Activated B cell treated with CpG ODN at 0.5 μM for 24 hours (primary cell): ENCODE measurements at regions of chr4 and their contacts with region 1.

Region 1: DNA sequence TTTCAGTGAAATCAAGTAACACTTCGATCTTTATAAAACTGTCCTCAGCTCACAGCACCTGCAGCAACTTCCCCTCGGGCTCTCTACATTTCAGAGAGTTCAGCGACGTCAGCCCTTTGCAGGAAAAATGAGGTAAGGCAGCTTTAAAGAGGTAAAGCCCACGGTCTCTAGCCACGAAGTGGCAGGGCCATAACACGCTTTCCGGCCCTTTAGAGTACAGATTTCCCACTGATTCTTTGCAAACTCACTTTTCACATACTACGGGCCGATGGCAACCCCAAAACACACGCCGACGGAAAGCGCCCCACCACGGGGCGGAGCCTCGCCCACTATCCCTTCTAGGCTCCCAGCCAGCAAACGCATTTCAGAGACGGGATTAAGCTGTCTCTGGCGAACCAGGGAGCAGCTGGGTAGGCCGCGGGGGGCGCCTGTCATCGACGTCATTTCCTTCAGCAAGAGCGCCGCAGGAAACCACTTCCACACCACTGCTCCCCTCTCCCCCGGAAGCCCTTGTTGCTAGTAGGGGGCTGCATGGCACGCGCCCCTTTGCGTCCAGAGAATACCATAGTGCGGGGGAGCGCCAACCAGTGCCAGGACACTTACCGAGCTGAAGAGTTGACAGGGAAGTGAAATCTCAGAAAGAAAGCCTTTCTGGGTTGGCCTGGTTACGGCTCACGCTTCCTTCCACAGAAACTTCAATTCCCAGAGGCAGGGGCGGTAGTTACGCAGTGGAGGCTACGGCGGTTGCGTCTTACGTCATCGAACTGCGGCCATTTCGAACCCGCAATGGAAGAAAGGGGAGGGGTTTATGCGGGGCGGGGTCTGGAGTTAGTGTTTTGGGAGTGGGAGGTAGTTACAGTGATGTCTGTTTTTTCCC is at the start of gene TRMT10A:
- DNase-seq: peak; percentile 88
- ATAC-seq: peak; percentile 85
- H3K4me3 Mint-ChIP-seq: peak within 1 kb of the TSS; percentile 99
- H3K27ac Mint-ChIP-seq: peak within 1 kb of the TSS; percentile 100
- H3K4me1 Mint-ChIP-seq: peaks cover 18% of the 10 kb centered on the region
- H3K27me3 Mint-ChIP-seq: peaks cover 12% of the 10 kb centered on the region
- CTCF ChIP-seq: no peak
- total RNA-seq, gene TRMT10A: 4.9 and 10.2 TPM in 2 replicates

Region 2: DNA sequence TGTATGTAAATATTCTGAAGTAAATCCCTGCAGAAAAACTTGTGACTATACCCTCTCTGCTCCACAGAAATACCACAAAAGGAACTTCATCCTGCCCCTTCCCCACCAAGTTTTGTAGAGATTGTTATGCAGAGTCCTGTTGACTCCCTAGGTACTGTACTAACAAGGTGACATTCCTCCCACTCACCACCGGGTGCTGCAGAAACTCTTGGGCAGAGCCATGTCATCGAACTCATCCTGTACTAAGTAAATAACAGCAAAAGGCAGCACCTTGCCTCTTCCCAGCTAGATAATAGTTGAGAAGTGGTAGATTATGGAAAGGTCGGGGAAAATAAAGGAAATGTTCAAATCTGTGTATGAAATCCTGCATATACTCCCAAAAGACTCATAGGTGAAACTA is 1653.5 kb before region 1 on chr4:
- CTCF ChIA-PET with region 1: no interaction called
- POLR2A ChIA-PET with region 1: no interaction called
- intact Hi-C with region 1: no loop called
- DNase-seq: no peak
- ATAC-seq: no peak
- H3K4me3 Mint-ChIP-seq: no peak overlapping the region
- H3K27ac Mint-ChIP-seq: no peak overlapping the region
- H3K4me1 Mint-ChIP-seq: no peaks in the 10 kb centered on the region
- H3K27me3 Mint-ChIP-seq: no peaks in the 10 kb centered on the region
- CTCF ChIP-seq: no peak

Region 3: DNA sequence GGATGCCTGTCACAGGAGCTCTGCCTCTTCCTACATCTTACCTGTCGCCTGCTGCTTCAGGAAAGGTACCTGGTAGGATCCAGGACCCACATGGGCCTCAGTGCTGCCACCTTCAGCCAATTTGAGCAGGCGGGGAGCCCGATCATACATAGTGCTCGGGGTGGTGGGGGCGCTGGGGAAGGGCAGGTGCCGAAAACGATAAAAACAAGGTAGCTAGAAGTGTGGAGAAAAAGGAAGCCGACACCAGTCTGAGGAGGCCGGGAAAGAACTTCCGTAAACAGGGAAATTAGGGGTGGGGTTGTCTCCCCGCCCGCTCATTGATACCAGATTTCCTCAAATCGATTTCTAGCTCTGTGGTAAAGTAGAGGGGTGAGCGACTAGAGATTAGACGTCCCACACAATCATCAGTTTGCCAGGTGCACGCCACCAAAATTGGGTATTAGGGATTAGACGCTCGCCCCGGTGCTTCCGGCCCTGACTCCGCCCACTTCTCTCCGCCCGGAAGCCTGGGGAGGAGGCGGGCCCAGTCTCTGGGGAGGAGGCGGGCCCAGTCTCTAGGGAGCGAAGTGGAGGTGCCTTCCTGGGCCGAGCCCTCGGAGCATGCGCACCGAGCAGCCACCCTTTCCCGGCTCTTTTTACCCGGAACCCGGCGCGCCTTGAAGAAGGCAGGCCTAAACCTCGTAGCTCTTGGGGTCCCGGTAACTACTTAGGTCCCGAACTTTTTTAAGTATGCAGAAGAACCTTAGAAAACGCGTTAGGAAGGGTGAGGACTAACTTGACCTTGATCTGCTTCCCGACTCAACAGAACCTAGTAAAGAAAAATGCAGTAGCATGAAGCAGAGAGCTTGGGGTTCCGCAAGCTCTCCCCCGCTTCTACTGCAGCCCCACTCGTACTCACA is 1420.3 kb before region 1 on chr4 and contains the start of gene STPG2:
- CTCF ChIA-PET with region 1: no interaction called
- POLR2A ChIA-PET with region 1: interaction called, 7 read pairs
- intact Hi-C with region 1: loop called (anchors 1 kb)
- DNase-seq: peak; percentile 97
- ATAC-seq: peak; percentile 99
- H3K4me3 Mint-ChIP-seq: peak within 1 kb of the TSS; percentile 92
- H3K27ac Mint-ChIP-seq: peak within 1 kb of the TSS; percentile 97
- H3K4me1 Mint-ChIP-seq: peaks cover 25% of the 10 kb centered on the region
- H3K27me3 Mint-ChIP-seq: no peaks in the 10 kb centered on the region
- CTCF ChIP-seq: no peak
- total RNA-seq, gene STPG2: 0.37 and 0.69 TPM in 2 replicates

Region 4: GRCh38 chr4:98260579-98261290 is 1302.8 kb before region 1 on chr4:
- CTCF ChIA-PET with region 1: no interaction called
- POLR2A ChIA-PET with region 1: interaction called, 4 read pairs
- intact Hi-C with region 1: loop called (anchors 5 kb)
- DNase-seq: peak; percentile 89
- ATAC-seq: peak; percentile 93
- H3K4me3 Mint-ChIP-seq: peak overlapping the region; percentile 95
- H3K27ac Mint-ChIP-seq: peak overlapping the region; percentile 94
- H3K4me1 Mint-ChIP-seq: peaks cover 48% of the 10 kb centered on the region
- H3K27me3 Mint-ChIP-seq: no peaks in the 10 kb centered on the region
- CTCF ChIP-seq: no peak

Region 5: GRCh38 chr4:99088481-99089365 is 474.8 kb before region 1 on chr4 and contains the start of gene ADH5:
- CTCF ChIA-PET with region 1: no interaction called
- POLR2A ChIA-PET with region 1: interaction called, 23 read pairs
- intact Hi-C with region 1: loop called (anchors 2 kb)
- DNase-seq: peak; percentile 77
- ATAC-seq: peak; percentile 95
- H3K4me3 Mint-ChIP-seq: peak within 1 kb of the TSS; percentile 99
- H3K27ac Mint-ChIP-seq: peak within 1 kb of the TSS; percentile 99
- H3K4me1 Mint-ChIP-seq: peaks cover 41% of the 10 kb centered on the region
- H3K27me3 Mint-ChIP-seq: no peaks in the 10 kb centered on the region
- CTCF ChIP-seq: no peak
- total RNA-seq, gene ADH5: 70.1 and 74.2 TPM in 2 replicates

Region 6: DNA sequence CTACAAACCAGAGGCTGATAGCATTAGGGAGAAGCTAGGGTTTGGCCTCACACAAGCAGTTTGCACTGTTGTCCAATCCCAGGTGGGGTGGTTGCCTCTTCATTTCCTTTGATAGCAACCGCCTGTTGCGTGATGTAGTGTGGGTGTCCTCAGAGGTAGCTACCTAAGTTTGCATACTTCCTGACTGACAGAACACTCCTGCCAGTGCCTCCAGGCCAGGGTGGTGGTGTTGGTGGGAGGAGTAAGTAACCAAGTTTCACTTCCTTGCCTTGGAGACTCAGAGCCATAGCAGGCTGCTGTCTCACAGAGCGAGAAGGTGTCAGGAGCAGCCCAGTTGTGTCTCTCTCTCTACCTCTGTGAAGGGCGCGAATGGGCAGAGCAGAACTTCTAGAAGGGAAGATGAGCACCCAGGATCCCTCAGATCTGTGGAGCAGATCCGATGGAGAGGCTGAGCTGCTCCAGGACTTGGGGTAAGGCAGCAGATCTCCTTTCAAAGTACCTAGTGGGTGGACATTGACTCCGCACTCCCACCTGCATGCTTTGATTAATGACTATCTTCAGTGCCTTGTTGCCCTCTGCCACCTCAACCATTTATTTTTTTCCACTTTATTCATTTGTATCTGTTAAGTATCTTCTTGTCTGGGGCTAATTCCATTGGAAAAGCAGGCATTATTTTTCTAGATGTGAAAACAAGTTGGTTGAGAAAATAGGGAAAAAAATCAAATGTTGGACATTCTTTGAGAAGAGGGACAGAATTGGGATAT is 253.2 kb after region 1 on chr4 and contains the start of gene DAPP1:
- CTCF ChIA-PET with region 1: interaction called, 5 read pairs
- POLR2A ChIA-PET with region 1: interaction called, 25 read pairs
- intact Hi-C with region 1: loop called (anchors 1 kb)
- DNase-seq: peak; percentile 64
- ATAC-seq: peak; percentile 92
- H3K4me3 Mint-ChIP-seq: peak within 1 kb of the TSS; percentile 89
- H3K27ac Mint-ChIP-seq: peak within 1 kb of the TSS; percentile 88
- H3K4me1 Mint-ChIP-seq: peaks cover 75% of the 10 kb centered on the region
- H3K27me3 Mint-ChIP-seq: no peaks in the 10 kb centered on the region
- CTCF ChIP-seq: no peak
- total RNA-seq, gene DAPP1: 137 and 144 TPM in 2 replicates

Region 7: DNA sequence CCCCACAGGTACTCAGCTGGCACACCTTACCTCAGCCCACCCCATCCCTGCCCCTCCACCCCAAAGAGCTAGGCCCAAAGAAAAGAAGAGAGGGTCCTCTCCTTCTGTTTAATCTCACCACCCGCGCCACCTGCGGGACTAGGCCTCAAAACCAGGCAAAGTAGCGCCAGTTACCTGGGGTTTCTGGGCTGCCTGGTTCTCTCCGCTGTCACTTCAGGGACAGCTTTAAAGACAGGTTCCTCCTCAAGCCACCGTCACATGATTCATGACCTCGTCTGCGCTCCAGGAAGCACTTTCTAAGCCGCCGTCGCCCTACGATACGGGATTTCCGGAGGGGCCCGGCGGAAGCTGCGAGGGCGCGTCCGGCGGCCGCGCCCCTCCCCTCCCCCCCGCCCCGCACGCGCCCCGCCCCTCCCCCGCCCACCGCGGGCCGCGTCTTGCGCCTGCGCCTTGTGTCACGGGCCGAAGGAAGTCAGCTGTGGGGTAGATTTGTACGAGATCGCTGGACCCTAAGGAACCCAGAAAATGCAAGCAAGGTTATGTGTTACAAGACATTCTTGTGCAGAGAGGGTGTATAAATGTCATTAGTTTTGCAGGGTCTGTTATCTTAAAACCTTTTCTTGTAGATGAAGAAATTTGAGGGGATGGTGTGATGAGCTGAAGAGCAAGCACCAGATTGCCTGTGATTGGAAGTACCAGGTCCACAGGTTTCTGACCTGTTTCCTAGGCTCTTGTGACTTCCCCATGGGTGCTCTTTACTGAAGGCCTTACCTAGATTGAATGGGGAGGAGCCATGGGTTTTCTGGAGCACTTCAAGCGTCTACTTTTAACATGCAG is 330.8 kb after region 1 on chr4 and contains the start of gene LAMTOR3:
- CTCF ChIA-PET with region 1: no interaction called
- POLR2A ChIA-PET with region 1: interaction called, 19 read pairs
- intact Hi-C with region 1: loop called (anchors 1 kb)
- DNase-seq: peak; percentile 78
- ATAC-seq: peak; percentile 98
- H3K4me3 Mint-ChIP-seq: peak within 1 kb of the TSS; percentile 94
- H3K27ac Mint-ChIP-seq: peak within 1 kb of the TSS; percentile 90
- H3K4me1 Mint-ChIP-seq: peaks cover 26% of the 10 kb centered on the region
- H3K27me3 Mint-ChIP-seq: no peaks in the 10 kb centered on the region
- CTCF ChIP-seq: no peak
- total RNA-seq, gene LAMTOR3: 21.9 and 23.8 TPM in 2 replicates

Region 8: DNA sequence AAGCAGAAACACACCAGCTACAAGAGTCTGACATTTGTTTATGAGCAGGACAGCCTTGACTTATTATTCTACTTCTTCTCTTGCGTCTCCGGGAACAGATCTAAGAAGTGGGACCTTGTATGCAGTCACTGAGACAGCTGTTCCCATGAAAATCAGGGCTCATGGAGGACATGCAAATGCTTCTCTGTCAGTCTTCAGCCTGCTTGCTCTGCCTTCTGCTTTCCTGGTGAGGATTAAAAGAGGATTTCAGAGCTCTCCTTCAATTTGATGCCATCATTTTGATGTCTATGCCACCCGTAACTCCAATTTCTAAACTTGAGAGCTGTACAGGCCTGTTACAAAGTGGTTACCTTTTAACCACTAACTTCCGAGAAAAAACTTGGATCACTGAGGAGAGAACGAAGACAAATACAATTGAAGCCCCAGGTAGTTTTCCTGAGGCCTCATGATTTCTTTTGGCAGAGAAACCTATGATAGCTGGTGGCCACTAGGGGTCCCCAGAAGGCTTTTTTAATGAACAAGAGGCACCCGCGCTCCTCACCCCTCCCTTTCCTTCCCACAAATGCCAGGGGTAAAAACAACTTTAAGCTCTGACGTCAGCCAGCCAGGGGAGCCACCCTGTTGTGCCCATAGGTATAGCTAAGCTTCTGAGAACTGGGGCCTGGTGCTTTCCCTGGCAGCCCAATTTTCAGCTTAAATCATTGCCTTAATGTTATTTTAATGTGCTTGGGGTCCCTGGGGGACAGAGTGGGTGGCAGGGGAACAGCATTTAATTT is 529.7 kb after region 1 on chr4:
- CTCF ChIA-PET with region 1: no interaction called
- POLR2A ChIA-PET with region 1: no interaction called
- intact Hi-C with region 1: loop called (anchors 5 kb)
- DNase-seq: peak; percentile 58
- ATAC-seq: peak; percentile 97
- H3K4me3 Mint-ChIP-seq: no peak overlapping the region
- H3K27ac Mint-ChIP-seq: peak overlapping the region; percentile 78
- H3K4me1 Mint-ChIP-seq: peaks cover 32% of the 10 kb centered on the region
- H3K27me3 Mint-ChIP-seq: no peaks in the 10 kb centered on the region
- CTCF ChIP-seq: no peak